Dorsolateral prefrontal cortex (tissue), 120 donors: ENCODE measurements at regions of chr5 and their contacts with region 1.

Region 1: DNA sequence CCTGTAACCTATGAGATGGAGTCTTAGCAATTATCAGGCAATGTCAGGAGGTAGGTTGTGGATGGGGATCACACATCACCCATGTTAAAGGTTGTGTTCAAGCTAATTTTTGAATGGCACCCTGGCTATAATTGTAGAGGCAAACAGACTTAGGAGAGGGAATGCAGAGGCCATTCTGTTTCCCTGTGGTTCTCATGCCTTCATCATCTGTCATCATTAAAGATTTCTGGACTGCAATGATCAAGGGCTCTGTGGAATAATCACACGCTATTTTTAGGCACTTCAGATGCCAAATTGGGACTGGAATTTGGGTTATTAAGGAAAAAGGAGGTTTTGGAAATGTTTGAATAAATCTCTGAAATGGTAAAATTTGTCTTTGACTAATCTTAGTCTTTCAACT is 1065.4 kb downstream of the TAF11L14 start:
- DNase-seq: no peak
- H3K4me3 ChIP-seq: no peak overlapping the region
- H3K27ac ChIP-seq: no peak overlapping the region
- H3K27me3 ChIP-seq: no peaks in the 10 kb centered on the region
- CTCF ChIP-seq: no peak

Region 2: GRCh38 chr5:18393589-18394442 is 305.9 kb before region 1 on chr5:
- intact Hi-C with region 1: loop called (anchors 5 kb)
- DNase-seq: peak; percentile 56 to 79 (median 70)
- H3K4me3 ChIP-seq: peak overlapping the region in 9 of 59 donors; percentile 5 to 51 (median 30)
- H3K27ac ChIP-seq: peak overlapping the region in 11 of 59 donors; percentile 3 to 64 (median 39)
- H3K27me3 ChIP-seq: peaks cover 0 to 3% (median 0%) of the 10 kb centered on the region in 45 donors
- CTCF ChIP-seq: peak; percentile 73 to 95 (median 89)

Region 3: DNA sequence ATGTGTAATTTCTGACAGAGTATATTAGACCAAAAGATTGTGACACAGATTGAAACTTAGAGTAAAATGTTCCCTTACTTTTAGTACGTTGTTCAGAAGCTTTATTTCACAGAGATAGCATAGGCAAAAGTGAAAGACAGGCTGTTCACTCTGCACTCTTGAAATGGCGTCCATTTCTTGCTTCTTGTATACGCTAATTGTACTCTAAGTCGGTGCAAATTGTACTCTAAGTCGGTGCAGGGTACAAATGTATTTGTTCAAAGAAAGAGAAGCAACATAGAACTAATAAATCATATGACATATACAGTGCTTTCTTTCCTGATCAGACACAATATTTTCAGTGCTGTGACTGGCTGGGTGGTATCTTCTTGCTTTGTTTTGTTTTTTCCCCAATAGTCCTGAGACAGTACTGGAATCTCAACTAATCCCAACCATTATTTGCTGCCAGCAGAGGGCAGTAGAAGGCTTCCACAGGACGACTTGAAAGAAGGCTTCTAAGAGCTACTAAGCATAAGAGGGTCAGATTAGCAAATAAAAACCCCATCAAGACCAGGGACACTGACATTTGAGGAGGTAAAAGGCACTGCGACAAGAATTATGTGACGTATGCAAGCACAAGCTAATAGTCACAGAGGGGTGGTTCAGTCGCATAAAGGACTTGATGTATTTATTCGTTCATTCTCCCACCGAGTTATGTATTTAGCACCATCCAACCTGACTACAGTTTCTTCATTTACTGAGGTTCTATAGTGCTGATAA is 233.7 kb before region 1 on chr5:
- intact Hi-C with region 1: loop called in 1 of 2 experiments (anchors 5 kb)
- DNase-seq: peak; percentile 28 to 81 (median 50)
- H3K4me3 ChIP-seq: peak overlapping the region in 36 of 59 donors; percentile 1 to 58 (median 25)
- H3K27ac ChIP-seq: peak overlapping the region in 2 of 59 donors; percentile 4 to 17
- H3K27me3 ChIP-seq: no peaks in the 10 kb centered on the region
- CTCF ChIP-seq: peak; percentile 30 to 88 (median 74)